Activated CD4-positive, alpha-beta memory T cell treated with anti-CD3 and anti-CD28 coated beads for 36 hours (primary cell): ENCODE measurements at regions of chr6 and their contacts with region 1.

Region 1: GRCh38 chr6:134938896-134939295 is 11.0 kb downstream of the ALDH8A1 start:
- DNase-seq: peak; percentile 87
- H3K4me3 Mint-ChIP-seq: no peak overlapping the region
- H3K27ac Mint-ChIP-seq: no peak overlapping the region
- H3K4me1 Mint-ChIP-seq: peaks cover 20% of the 10 kb centered on the region
- H3K27me3 Mint-ChIP-seq: no peaks in the 10 kb centered on the region

Region 2: DNA sequence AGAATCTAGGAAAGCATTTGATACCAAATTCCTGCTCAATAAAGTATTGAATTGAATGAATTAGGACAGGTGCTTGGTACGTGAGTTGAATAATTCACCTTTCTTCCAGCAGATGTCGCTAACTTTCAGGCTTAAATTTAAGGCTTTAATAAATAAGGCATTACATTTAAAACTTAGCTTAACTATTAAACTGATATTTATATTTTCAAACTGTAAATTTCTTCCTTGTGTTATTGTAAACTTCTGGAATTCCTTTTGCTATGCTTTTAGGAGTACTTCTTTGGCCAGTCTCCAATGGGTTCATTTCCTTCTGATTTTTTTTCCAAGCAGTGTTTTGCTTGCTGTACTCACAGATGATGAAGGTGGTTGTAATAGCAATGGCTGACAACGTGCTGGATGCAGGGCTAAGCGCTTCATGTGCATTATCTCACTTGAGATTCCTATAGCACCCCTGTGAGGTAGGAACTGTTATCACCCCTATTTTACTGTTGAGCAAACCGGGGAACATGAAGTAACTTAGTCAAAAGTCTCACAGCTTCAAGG is 815.2 kb before region 1 on chr6:
- CTCF ChIA-PET with region 1: interaction called, 65 read pairs
- POLR2A ChIA-PET with region 1: no interaction called
- intact Hi-C with region 1: no loop called
- DNase-seq: no peak
- H3K4me3 Mint-ChIP-seq: no peak overlapping the region
- H3K27ac Mint-ChIP-seq: no peak overlapping the region
- H3K4me1 Mint-ChIP-seq: no peaks in the 10 kb centered on the region
- H3K27me3 Mint-ChIP-seq: no peaks in the 10 kb centered on the region

Region 3: DNA sequence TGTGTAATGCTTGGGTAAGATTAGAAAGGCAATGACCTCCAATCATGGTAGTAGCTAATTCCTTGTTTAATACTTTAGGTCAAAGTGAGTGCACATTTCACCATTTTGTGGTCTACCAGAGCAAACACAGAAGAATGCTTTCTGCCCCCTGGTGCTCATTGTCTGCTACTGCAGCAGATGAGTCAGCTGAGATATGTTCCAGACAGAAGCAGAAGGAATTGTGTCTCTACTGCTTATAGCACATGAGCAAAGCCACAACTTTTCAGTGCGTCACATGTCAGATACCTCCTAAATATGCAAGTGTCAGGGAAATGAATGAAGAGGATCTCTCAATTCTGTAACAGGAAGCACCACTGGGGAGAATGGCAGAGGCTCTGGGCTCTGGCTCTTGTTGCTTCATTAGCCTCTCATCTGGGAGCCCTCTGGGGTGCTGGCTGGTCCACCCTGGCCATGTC is 297.9 kb before region 1 on chr6:
- CTCF ChIA-PET with region 1: interaction called, 19 read pairs
- POLR2A ChIA-PET with region 1: no interaction called
- intact Hi-C with region 1: loop called (anchors 2 kb)
- DNase-seq: peak; percentile 85
- H3K4me3 Mint-ChIP-seq: no peak overlapping the region
- H3K27ac Mint-ChIP-seq: no peak overlapping the region
- H3K4me1 Mint-ChIP-seq: peaks cover 32% of the 10 kb centered on the region
- H3K27me3 Mint-ChIP-seq: no peaks in the 10 kb centered on the region

Region 4: GRCh38 chr6:134840086-134840867 is 98.6 kb before region 1 on chr6:
- CTCF ChIA-PET with region 1: interaction called, 10 read pairs
- POLR2A ChIA-PET with region 1: no interaction called
- intact Hi-C with region 1: no loop called
- DNase-seq: no peak
- H3K4me3 Mint-ChIP-seq: no peak overlapping the region
- H3K27ac Mint-ChIP-seq: no peak overlapping the region
- H3K4me1 Mint-ChIP-seq: no peaks in the 10 kb centered on the region
- H3K27me3 Mint-ChIP-seq: no peaks in the 10 kb centered on the region

Region 5: GRCh38 chr6:134908906-134909516 is 29.9 kb before region 1 on chr6:
- CTCF ChIA-PET with region 1: interaction called, 13 read pairs
- POLR2A ChIA-PET with region 1: no interaction called
- intact Hi-C with region 1: no loop called
- DNase-seq: peak; percentile 50
- H3K4me3 Mint-ChIP-seq: no peak overlapping the region
- H3K27ac Mint-ChIP-seq: no peak overlapping the region
- H3K4me1 Mint-ChIP-seq: no peaks in the 10 kb centered on the region
- H3K27me3 Mint-ChIP-seq: no peaks in the 10 kb centered on the region

Region 6: GRCh38 chr6:134954272-134955000 is 15.5 kb after region 1 on chr6:
- CTCF ChIA-PET with region 1: interaction called, 23 read pairs
- POLR2A ChIA-PET with region 1: no interaction called
- intact Hi-C with region 1: no loop called
- DNase-seq: no peak
- H3K4me3 Mint-ChIP-seq: no peak overlapping the region
- H3K27ac Mint-ChIP-seq: no peak overlapping the region
- H3K4me1 Mint-ChIP-seq: peaks cover 16% of the 10 kb centered on the region
- H3K27me3 Mint-ChIP-seq: no peaks in the 10 kb centered on the region

Region 7: DNA sequence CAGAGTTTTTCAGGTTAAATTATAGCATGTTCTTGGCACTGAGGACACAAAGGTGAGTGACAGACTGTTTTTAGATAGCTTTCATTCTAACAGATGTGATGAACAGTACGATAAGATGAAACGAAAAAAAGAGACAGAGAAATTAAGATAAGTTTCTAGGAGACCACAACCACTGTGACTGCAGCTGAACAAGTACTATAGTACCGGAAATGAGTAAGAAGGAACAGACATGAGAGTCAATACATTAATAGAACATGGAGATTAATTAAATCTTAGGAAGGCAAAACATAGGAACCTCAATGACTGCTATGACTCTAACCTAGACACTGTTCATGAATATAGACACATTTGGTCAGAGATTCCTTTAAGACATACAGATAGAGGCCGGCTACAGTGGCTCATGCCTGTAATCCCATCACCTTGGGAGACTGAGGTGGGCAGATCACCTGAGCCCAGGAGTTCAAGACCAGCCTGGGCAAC is 75.5 kb after region 1 on chr6:
- CTCF ChIA-PET with region 1: no interaction called
- POLR2A ChIA-PET with region 1: no interaction called
- intact Hi-C with region 1: no loop called
- DNase-seq: peak; percentile 17
- H3K4me3 Mint-ChIP-seq: peak overlapping the region; percentile 32
- H3K27ac Mint-ChIP-seq: peak overlapping the region; percentile 70
- H3K4me1 Mint-ChIP-seq: peaks cover 48% of the 10 kb centered on the region
- H3K27me3 Mint-ChIP-seq: no peaks in the 10 kb centered on the region